ENCODE measurements at regions of chr7 and their contacts with region 1.

Region 1: GRCh38 chr7:152675759-152676636 is at the start of gene XRCC2:
- DNase-seq: peak; percentile 93
- H3K4me3 ChIP-seq: peak within 1 kb of the TSS; percentile 80
- H3K27ac ChIP-seq: peak within 1 kb of the TSS; percentile 68
- H3K4me1 ChIP-seq: peaks cover 15% of the 10 kb centered on the region
- CTCF ChIP-seq: no peak
- total RNA-seq, gene XRCC2: 39.7 and 40.0 TPM in 2 replicates

Region 2: GRCh38 chr7:152336754-152337368 is 339.1 kb before region 1 on chr7:
- CTCF ChIA-PET with region 1: no interaction called
- POLR2A ChIA-PET with region 1: no interaction called
- intact Hi-C with region 1: loop called (anchors 10 kb)
- DNase-seq: peak; percentile 70
- H3K4me3 ChIP-seq: no peak overlapping the region
- H3K27ac ChIP-seq: peak overlapping the region; percentile 51
- H3K4me1 ChIP-seq: peaks cover 81% of the 10 kb centered on the region
- CTCF ChIP-seq: peak; percentile 91

Region 3: GRCh38 chr7:152759949-152760853 is 84.2 kb after region 1 on chr7:
- CTCF ChIA-PET with region 1: no interaction called
- POLR2A ChIA-PET with region 1: no interaction called
- intact Hi-C with region 1: loop called (anchors 5 kb)
- DNase-seq: no peak
- H3K4me3 ChIP-seq: peak overlapping the region; percentile 99
- H3K27ac ChIP-seq: no peak overlapping the region
- H3K4me1 ChIP-seq: peaks cover 11% of the 10 kb centered on the region
- CTCF ChIP-seq: no peak